RWPE1 (cell line): ENCODE measurements at regions of chr3 and their contacts with region 1.

Region 1: GRCh38 chr3:61858056-61858455 is 296.7 kb downstream of the PTPRG start:
- DNase-seq: no peak
- H3K27ac ChIP-seq: no peak overlapping the region
- CTCF ChIP-seq: peak; percentile 65

Region 2: DNA sequence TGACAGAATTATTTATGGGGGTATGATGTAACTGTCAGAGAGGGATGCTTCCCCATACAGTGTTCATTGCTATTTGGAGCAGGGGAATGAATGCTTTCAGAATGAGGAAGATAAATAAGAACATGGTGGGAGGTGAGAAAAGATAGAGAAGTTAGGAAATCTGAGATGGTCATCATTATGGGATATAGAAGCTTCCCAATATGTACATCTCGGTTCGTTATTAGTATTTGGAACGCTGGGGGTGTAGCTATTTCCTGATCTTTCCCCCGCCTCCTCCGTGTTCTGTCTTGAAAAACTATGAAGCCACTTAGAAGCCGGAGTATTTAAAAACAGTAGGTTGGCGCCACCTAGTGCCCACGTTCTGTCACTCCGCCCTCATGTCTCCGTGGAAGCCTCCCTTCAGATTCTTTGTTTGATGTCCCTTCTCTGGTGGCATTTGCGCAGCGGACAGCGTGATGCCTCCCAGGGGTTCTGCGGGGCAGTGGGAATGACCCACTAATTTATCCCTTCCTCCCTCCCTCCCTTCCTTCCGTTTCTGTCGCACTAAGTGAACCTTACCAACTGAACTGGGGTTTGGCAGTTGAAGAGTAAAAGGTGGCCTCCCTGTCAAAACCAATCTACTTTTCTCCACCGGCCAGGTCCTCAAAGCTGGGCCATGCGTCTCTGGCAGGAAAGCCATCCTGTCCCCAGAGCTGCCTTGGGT is 330.8 kb after region 1 on chr3:
- CTCF ChIA-PET with region 1: interaction called, 11 read pairs
- POLR2A ChIA-PET with region 1: no interaction called
- DNase-seq: peak; percentile 61
- H3K27ac ChIP-seq: no peak overlapping the region
- CTCF ChIP-seq: peak; percentile 78

Region 3: GRCh38 chr3:62201438-62202035 is 343.5 kb after region 1 on chr3:
- CTCF ChIA-PET with region 1: no interaction called
- POLR2A ChIA-PET with region 1: no interaction called
- DNase-seq: peak; percentile 22
- H3K27ac ChIP-seq: no peak overlapping the region
- CTCF ChIP-seq: peak; percentile 60